Esophagus muscularis mucosa (tissue), 4 donors: ENCODE measurements at regions of chr6 and their contacts with region 1.

Region 1: DNA sequence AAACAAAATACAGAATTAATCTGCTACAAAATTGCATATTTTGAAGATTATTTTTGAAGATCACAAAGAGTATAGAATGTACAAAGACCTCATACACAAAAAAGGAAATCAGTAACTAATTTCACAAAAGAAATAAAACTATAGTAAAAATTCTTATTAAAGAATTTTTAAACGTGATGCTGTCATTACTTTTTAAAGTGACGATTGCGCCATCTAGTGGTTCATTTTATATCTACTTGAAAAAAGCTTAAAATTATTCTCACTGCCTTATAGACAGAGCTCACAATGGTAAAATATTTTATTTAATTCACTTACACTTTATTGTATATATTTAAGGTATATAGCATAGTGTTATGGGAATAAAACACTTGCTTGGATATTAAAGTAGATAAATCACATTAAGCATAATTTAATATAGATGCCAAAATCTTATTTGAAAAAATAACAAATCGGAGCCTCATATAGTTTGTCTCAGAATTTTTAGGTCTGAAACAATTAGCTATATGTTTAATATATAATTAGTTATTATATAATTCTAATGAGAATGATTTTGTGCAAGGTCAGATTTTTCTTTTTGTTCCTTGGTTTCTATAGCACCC is 128.8 kb downstream of the PHF3 start:
- DNase-seq: no peak
- H3K4me3 ChIP-seq: no peak overlapping the region
- H3K27ac ChIP-seq: no peak overlapping the region
- H3K4me1 ChIP-seq: no peaks in the 10 kb centered on the region
- H3K27me3 ChIP-seq: peaks cover 0 to 5% (median 0%) of the 10 kb centered on the region in 4 donors
- CTCF ChIP-seq: peak; percentile 51 to 69 (median 59)
- EP300 ChIP-seq: no peak
- POLR2A ChIP-seq: no peak

Region 2: GRCh38 chr6:63352587-63353285 is 411.7 kb before region 1 on chr6:
- intact Hi-C with region 1: loop called (anchors 5 kb)
- DNase-seq: no peak
- H3K4me3 ChIP-seq: no peak overlapping the region
- H3K27ac ChIP-seq: no peak overlapping the region
- H3K4me1 ChIP-seq: peaks cover 0 to 4% (median 0%) of the 10 kb centered on the region in 4 donors
- H3K27me3 ChIP-seq: no peaks in the 10 kb centered on the region
- CTCF ChIP-seq: peak; percentile 33 to 49 (median 40)
- EP300 ChIP-seq: no peak
- POLR2A ChIP-seq: no peak

Region 3: GRCh38 chr6:63525186-63525878 is 239.1 kb before region 1 on chr6:
- intact Hi-C with region 1: no loop called
- DNase-seq: no peak
- H3K4me3 ChIP-seq: no peak overlapping the region
- H3K27ac ChIP-seq: no peak overlapping the region
- H3K4me1 ChIP-seq: peaks cover 0 to 10% (median 7%) of the 10 kb centered on the region in 4 donors
- H3K27me3 ChIP-seq: no peaks in the 10 kb centered on the region
- CTCF ChIP-seq: no peak
- EP300 ChIP-seq: no peak
- POLR2A ChIP-seq: no peak

Region 4: DNA sequence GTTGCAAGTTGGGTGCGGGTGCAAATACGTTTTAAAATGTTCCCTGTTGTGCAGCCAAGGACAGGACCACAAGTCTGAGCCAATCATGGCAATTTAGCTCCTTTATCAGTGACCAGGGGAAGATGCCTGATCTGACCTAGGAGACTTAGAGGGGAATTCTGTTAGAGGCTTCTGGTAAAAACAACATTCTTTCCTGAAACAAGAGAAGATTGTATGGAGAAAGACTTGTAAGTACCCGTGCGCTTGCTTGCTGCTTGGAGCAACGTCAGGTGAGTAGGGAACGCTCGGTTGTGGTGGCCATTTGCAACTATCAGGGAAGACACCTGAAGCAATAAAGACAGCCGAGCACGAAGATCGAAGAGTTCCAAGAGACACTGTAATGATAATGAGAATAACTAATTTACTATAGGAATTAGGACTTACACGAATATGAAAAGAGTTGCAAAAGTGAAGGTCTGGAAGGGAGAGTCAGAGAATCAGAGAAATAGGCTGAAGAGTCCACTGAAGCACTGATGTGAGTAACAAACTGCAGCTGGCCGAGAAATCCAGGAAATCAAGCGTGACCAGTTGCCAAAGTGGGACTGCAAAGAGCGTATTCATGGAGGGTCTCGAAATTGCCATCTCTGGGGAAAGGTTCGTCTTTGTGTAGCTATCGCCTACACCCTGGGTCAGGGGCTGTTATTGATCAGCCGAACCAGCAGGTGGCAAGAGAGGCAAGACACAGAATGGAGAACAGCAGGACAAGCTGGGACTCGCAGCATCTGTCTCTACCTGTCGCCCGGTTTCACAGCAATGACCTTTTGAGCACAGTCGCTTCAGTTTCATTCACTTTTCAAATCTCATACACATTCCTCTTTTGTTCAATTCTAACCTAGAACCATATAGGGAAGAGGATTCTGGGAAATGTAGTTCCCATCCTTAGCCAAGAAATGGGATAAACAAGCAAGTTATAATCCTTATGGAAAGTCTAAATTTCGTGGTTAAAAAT is 166.1 kb before region 1 on chr6:
- intact Hi-C with region 1: loop called (anchors 1 kb)
- DNase-seq: no peak
- H3K4me3 ChIP-seq: peak overlapping the region; percentile 46 to 62 (median 49)
- H3K27ac ChIP-seq: no peak overlapping the region
- H3K4me1 ChIP-seq: peaks cover 0 to 14% (median 8%) of the 10 kb centered on the region in 4 donors
- H3K27me3 ChIP-seq: no peaks in the 10 kb centered on the region
- CTCF ChIP-seq: peak; percentile 86 to 96 (median 87)
- EP300 ChIP-seq: no peak
- POLR2A ChIP-seq: no peak